ENCODE measurements at regions of chr7 and their contacts with region 1.

Region 1: DNA sequence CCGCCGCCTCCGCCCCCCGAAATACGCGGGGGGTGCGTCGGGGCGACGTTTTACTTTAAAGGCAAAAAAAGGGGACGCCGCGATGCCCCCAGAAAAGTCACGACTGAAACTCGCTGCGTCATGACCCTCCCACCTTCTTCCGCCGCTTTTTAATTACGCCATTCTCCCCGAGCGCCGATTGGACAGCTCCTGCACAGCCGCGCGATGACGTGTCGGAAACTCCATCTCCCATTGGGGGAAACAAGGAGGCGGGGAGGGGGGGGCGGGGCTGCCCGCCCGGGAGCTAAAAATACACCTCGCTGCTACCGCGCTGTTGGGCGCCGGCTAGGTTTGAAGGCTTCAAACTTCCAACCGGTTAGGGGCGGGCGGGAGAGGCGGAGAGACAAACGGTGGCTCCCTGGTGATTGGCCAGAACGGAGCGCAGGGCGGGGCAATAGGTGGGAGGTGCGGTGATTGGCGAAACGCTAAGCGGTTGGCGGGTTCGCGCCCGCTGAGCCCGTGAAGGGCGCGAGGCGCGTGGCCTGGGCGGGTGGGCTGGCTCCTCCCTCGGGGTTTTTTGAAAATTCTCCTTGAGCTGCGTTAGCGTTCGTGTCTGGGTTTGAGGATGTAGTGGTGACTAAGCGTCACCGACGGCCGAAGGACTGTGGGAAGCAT is at the start of gene RHEB:
- DNase-seq: peak; percentile 98
- H3K4me3 ChIP-seq: peak within 1 kb of the TSS; percentile 58 to 82
- H3K4me3 Mint-ChIP-seq: peak within 1 kb of the TSS; percentile 92 to 100 (median 95)
- H3K27ac ChIP-seq: peak within 1 kb of the TSS; percentile 80
- H3K27ac Mint-ChIP-seq: peak within 1 kb of the TSS; percentile 97 to 100 (median 99)
- H3K4me1 ChIP-seq: peaks cover 44% of the 10 kb centered on the region
- H3K4me1 Mint-ChIP-seq: peaks cover 28 to 46% (median 38%) of the 10 kb centered on the region in 4 donors
- H3K27me3 ChIP-seq: no peaks in the 10 kb centered on the region
- H3K27me3 Mint-ChIP-seq: peaks cover 0 to 1% of the 10 kb centered on the region in 2 donors
- total RNA-seq, gene RHEB: 40.8 to 45.1 TPM

Region 2: DNA sequence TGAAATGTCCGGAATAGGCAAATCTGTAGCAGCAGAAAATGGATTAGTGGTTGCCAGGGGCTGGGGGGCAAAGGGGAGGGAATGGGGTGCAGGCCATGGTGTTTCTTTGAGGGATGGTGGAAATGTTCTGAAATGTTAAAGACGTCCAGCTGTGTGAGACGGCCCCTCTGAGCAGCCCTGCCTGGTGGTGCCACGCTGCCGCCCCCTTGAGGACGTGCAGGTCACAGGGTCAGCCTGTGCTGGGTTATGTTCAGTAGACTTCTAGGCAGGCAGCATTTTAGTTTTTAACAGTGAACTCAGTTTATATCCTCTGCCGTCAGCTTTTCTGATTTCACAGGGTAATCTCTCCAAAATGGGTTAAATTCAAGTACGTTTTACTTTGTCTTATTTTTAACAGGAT is 168.9 kb before region 1 on chr7:
- CTCF ChIA-PET with region 1: no interaction called
- POLR2A ChIA-PET with region 1: no interaction called
- intact Hi-C with region 1: loop called (anchors 2 kb)
- DNase-seq: no peak
- H3K4me3 ChIP-seq: no peak overlapping the region
- H3K4me3 Mint-ChIP-seq: peak overlapping the region; percentile 32 to 82 (median 73)
- H3K27ac ChIP-seq: peak overlapping the region; percentile 65
- H3K27ac Mint-ChIP-seq: peak overlapping the region; percentile 78 to 95 (median 89)
- H3K4me1 ChIP-seq: peaks cover 38% of the 10 kb centered on the region
- H3K4me1 Mint-ChIP-seq: peaks cover 33 to 61% (median 47%) of the 10 kb centered on the region in 4 donors
- H3K27me3 ChIP-seq: no peaks in the 10 kb centered on the region
- H3K27me3 Mint-ChIP-seq: no peaks in the 10 kb centered on the region

Region 3: DNA sequence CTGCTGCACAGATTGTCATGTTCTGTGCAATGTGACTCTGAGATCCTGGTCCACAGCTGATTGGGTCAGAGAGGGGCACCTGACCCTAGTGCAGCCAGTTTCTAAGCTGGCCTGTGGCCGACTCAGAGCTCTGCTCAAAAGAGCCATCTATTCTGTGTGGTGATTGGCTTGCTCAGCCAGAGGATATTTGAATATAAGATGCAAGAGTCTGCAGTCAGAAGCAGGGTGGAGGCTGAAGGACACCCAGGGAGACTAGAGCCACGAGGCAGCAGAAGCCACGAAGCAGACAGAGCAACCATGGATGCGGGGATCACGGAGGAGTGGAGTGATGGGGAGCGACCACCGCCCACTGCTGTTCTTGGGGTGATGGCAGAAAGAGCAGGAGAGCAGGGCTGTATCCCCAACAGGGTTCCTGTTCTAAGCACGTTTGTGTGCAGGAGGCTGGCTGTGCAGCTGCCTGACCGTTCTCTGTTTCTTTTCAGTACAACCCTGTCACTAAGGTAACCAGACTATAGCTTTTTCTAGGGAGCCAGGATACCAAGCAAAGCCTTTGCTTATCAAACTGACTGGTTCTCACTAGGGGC is 19.3 kb after region 1 on chr7:
- CTCF ChIA-PET with region 1: no interaction called
- POLR2A ChIA-PET with region 1: no interaction called
- intact Hi-C with region 1: no loop called
- DNase-seq: no peak
- H3K4me3 ChIP-seq: no peak overlapping the region
- H3K4me3 Mint-ChIP-seq: no peak overlapping the region
- H3K27ac ChIP-seq: no peak overlapping the region
- H3K27ac Mint-ChIP-seq: peak overlapping the region in 1 of 7 donors; percentile 51
- H3K4me1 ChIP-seq: no peaks in the 10 kb centered on the region
- H3K4me1 Mint-ChIP-seq: peaks cover 4 to 16% (median 9%) of the 10 kb centered on the region in 4 donors
- H3K27me3 ChIP-seq: no peaks in the 10 kb centered on the region
- H3K27me3 Mint-ChIP-seq: peaks cover 5 to 19% of the 10 kb centered on the region in 2 donors

Region 4: GRCh38 chr7:151560243-151560642 is 40.4 kb after region 1 on chr7:
- CTCF ChIA-PET with region 1: no interaction called
- POLR2A ChIA-PET with region 1: no interaction called
- intact Hi-C with region 1: loop called (anchors 5 kb)
- DNase-seq: no peak
- H3K4me3 ChIP-seq: no peak overlapping the region
- H3K4me3 Mint-ChIP-seq: peak overlapping the region in 6 of 8 donors; percentile 0 to 57 (median 8)
- H3K27ac ChIP-seq: no peak overlapping the region
- H3K27ac Mint-ChIP-seq: peak overlapping the region; percentile 4 to 92 (median 52)
- H3K4me1 ChIP-seq: peaks cover 12% of the 10 kb centered on the region
- H3K4me1 Mint-ChIP-seq: peaks cover 4 to 15% (median 8%) of the 10 kb centered on the region in 4 donors
- H3K27me3 ChIP-seq: no peaks in the 10 kb centered on the region
- H3K27me3 Mint-ChIP-seq: no peaks in the 10 kb centered on the region

Region 5: GRCh38 chr7:151705636-151706276 is 185.9 kb after region 1 on chr7:
- CTCF ChIA-PET with region 1: no interaction called
- POLR2A ChIA-PET with region 1: no interaction called
- intact Hi-C with region 1: no loop called
- DNase-seq: no peak
- H3K4me3 ChIP-seq: no peak overlapping the region
- H3K4me3 Mint-ChIP-seq: no peak overlapping the region
- H3K27ac ChIP-seq: no peak overlapping the region
- H3K27ac Mint-ChIP-seq: no peak overlapping the region
- H3K4me1 ChIP-seq: no peaks in the 10 kb centered on the region
- H3K4me1 Mint-ChIP-seq: peaks cover 0 to 9% (median 5%) of the 10 kb centered on the region in 4 donors
- H3K27me3 ChIP-seq: no peaks in the 10 kb centered on the region
- H3K27me3 Mint-ChIP-seq: no peaks in the 10 kb centered on the region

Region 6: DNA sequence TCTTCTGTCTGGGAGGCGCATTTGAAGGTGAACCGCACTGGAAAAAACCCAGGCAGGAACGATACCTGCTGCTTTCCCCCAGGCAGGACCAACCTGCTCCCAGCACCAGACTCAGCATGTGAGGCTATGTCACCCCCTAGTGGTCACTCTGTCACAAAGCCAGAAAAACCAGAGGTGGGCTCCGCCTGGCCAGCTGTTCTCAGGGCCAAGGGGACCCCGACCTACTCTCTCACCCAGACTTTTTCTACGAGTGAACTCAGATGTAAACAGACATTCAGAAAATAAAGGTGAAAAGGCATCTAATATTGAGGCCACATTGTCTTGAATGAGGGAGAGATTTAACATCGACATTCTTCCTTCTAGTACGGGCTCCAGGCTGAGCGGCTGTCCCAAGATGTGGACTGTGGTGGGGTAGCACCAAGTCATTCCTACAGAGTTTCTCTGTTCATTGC is 239.7 kb after region 1 on chr7:
- CTCF ChIA-PET with region 1: no interaction called
- POLR2A ChIA-PET with region 1: no interaction called
- intact Hi-C with region 1: loop called (anchors 5 kb)
- DNase-seq: peak; percentile 50 to 59 (median 58)
- H3K4me3 ChIP-seq: no peak overlapping the region
- H3K4me3 Mint-ChIP-seq: no peak overlapping the region
- H3K27ac ChIP-seq: no peak overlapping the region
- H3K27ac Mint-ChIP-seq: peak overlapping the region in 6 of 7 donors; percentile 41 to 79 (median 56)
- H3K4me1 ChIP-seq: peaks cover 19% of the 10 kb centered on the region
- H3K4me1 Mint-ChIP-seq: peaks cover 9 to 37% (median 29%) of the 10 kb centered on the region in 4 donors
- H3K27me3 ChIP-seq: no peaks in the 10 kb centered on the region
- H3K27me3 Mint-ChIP-seq: no peaks in the 10 kb centered on the region

Region 7: GRCh38 chr7:152436111-152436930 is 916.4 kb after region 1 on chr7:
- CTCF ChIA-PET with region 1: no interaction called
- POLR2A ChIA-PET with region 1: no interaction called
- intact Hi-C with region 1: loop called (anchors 5 kb)
- DNase-seq: peak; percentile 87 to 91 (median 89)
- H3K4me3 ChIP-seq: peak overlapping the region; percentile 17 to 70
- H3K4me3 Mint-ChIP-seq: peak overlapping the region; percentile 83 to 90 (median 86)
- H3K27ac ChIP-seq: peak overlapping the region; percentile 88
- H3K27ac Mint-ChIP-seq: peak overlapping the region; percentile 85 to 97 (median 96)
- H3K4me1 ChIP-seq: peaks cover 28% of the 10 kb centered on the region
- H3K4me1 Mint-ChIP-seq: peaks cover 11 to 32% (median 17%) of the 10 kb centered on the region in 4 donors
- H3K27me3 ChIP-seq: no peaks in the 10 kb centered on the region
- H3K27me3 Mint-ChIP-seq: no peaks in the 10 kb centered on the region

Measured in CD4-positive, alpha-beta memory T cell (primary cell).